Esophagus muscularis mucosa (tissue), 4 donors: ENCODE measurements at regions of chrX and their contacts with region 1.

Region 1: DNA sequence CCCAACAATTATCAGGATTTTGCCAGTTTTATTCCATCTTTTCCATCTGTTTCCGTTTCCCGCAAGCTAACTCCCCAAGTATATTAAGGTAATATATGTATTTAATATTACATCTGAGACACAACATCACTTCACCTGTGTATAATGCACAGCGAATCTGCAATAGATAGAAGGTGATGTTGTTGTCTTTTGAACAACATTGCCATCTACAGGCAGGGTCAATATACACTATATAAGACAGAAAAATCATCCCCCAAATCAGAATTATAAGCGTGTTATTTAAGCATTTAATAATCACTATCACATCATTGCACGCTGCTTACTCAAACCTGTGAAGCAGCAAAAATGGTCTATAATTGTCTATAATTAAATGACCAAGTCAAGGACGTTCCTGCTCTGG is 1115.5 kb downstream of the NLGN4X start:
- DNase-seq: no peak
- H3K4me3 ChIP-seq: no peak overlapping the region
- H3K27ac ChIP-seq: no peak overlapping the region
- H3K4me1 ChIP-seq: no peaks in the 10 kb centered on the region
- H3K27me3 ChIP-seq: no peaks in the 10 kb centered on the region
- CTCF ChIP-seq: peak; percentile 19 to 39 (median 35)
- EP300 ChIP-seq: no peak
- POLR2A ChIP-seq: no peak

Region 2: DNA sequence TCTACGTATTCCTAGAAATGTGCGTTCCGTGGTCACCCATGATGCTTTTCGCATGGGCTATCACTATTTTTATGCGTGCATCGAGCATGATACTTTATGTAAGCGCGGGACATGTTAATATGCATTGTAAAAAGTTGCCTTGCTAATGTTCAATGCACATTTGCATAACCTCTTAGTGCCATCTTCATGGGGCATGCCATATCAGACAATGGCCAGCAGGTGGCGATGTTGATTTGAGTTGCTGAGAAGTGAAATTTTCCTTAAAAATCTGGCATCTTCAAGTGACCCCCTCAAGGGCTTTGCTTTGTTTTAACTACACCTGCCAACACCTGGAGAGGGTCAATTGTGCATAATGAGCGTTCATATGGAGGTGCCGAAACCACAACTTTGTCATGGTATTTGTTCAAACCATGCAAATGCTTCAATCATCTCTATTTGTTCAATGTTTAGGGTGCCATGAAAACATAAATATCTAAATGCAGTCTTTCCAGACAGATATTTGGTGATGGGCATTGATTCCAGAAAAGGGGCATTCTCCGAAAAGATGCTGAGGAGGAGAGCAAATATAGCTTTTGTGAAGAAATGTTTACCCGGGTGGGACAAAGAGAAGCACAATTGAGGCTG is 565.8 kb before region 1 on chrX:
- intact Hi-C with region 1: loop called (anchors 5 kb)
- DNase-seq: no peak
- H3K4me3 ChIP-seq: no peak overlapping the region
- H3K27ac ChIP-seq: no peak overlapping the region
- H3K4me1 ChIP-seq: no peaks in the 10 kb centered on the region
- H3K27me3 ChIP-seq: no peaks in the 10 kb centered on the region
- CTCF ChIP-seq: peak; percentile 70 to 86 (median 82)
- EP300 ChIP-seq: no peak
- POLR2A ChIP-seq: no peak